ENCODE measurements at regions of chr1 and their contacts with region 1.

Region 1: DNA sequence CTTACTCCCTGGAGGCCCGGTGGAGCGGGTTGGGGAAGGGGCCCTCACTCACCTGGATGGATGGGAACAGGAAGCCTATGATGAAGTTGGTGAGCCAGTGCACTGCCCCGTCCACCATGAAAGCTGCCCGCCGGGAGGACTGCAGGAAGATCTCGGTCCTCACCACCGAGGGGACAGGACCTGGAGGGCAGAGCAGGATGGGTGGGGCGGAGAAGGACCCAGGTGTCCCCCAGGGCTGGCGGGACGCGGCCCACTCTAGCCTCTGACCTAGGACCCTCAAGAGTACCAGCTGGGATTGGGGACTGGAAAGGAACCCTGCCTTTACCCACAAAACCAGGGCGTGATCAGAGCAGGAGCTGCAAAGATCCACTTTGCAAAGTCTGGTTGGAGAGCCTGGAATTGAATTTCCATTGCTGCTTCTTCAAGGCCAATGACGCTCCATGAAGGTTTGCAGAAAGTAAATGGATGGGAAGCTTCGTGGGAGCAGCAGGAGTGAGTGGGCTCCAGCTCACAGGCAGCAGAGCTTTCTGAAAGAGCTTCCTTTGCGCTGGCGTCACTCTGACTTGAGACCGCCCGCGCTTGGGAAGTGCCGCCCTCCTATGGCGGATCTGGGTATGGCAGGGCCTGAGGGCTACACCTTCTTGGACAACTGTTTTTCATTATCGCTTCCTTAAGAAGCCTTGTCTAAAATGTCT is 21.4 kb downstream of the SLC2A7 start:
- DNase-seq: peak; percentile 94
- ATAC-seq: peak; percentile 76
- H3K4me3 Mint-ChIP-seq: peak overlapping the region; percentile 77
- H3K27ac Mint-ChIP-seq: peak overlapping the region; percentile 81
- H3K4me1 Mint-ChIP-seq: peaks cover 17% of the 10 kb centered on the region
- H3K27me3 Mint-ChIP-seq: peaks cover 3% of the 10 kb centered on the region

Region 2: GRCh38 chr1:8858888-8859706 is 145.8 kb before region 1 on chr1:
- POLR2A ChIA-PET with region 1: interaction called, 18 read pairs
- DNase-seq: no peak
- ATAC-seq: peak; percentile 38
- H3K4me3 Mint-ChIP-seq: peak overlapping the region; percentile 48
- H3K27ac Mint-ChIP-seq: peak overlapping the region; percentile 64
- H3K4me1 Mint-ChIP-seq: peaks cover 47% of the 10 kb centered on the region
- H3K27me3 Mint-ChIP-seq: no peaks in the 10 kb centered on the region

Region 3: GRCh38 chr1:8910914-8911313 is 93.9 kb before region 1 on chr1:
- POLR2A ChIA-PET with region 1: interaction called, 27 read pairs
- DNase-seq: no peak
- ATAC-seq: no peak
- H3K4me3 Mint-ChIP-seq: no peak overlapping the region
- H3K27ac Mint-ChIP-seq: peak overlapping the region; percentile 79
- H3K4me1 Mint-ChIP-seq: peaks cover 47% of the 10 kb centered on the region
- H3K27me3 Mint-ChIP-seq: no peaks in the 10 kb centered on the region

Region 4: DNA sequence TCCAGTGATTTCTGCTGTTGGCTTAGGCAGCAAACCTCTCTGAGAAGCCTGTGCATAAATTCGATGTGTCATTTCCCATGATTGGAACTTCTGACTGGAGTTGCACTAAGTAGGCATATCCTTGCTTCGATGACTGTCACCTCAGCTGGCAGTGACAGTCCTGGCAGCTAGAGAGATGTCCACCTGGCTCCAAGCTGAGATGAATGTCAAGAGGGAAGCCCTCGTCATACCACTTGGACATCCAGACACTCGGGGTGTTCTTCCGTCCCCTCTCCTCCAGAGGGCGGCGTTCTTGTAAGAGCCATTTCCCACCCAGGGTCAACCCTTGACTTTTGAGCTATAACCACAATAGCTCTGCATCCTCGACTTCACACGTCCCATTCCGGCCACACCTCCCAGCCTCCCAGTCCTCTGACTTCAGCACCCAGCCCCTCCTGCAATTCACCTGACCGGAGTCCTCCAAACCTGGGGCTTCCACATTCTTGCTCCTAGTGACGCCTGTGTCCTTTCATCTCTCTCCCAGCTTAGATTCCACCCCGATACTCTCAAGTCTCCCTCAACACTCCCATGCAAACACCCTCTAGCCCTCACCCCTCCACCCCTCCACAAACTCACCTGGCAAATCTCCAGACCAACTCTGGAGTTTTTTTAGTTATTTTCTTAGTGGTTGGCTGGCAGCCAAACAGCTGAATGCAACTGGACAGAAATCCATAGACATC is 41.9 kb before region 1 on chr1:
- POLR2A ChIA-PET with region 1: interaction called, 18 read pairs
- DNase-seq: peak; percentile 71
- ATAC-seq: peak; percentile 53
- H3K4me3 Mint-ChIP-seq: peak overlapping the region; percentile 79
- H3K27ac Mint-ChIP-seq: peak overlapping the region; percentile 86
- H3K4me1 Mint-ChIP-seq: peaks cover 70% of the 10 kb centered on the region
- H3K27me3 Mint-ChIP-seq: no peaks in the 10 kb centered on the region

Region 5: DNA sequence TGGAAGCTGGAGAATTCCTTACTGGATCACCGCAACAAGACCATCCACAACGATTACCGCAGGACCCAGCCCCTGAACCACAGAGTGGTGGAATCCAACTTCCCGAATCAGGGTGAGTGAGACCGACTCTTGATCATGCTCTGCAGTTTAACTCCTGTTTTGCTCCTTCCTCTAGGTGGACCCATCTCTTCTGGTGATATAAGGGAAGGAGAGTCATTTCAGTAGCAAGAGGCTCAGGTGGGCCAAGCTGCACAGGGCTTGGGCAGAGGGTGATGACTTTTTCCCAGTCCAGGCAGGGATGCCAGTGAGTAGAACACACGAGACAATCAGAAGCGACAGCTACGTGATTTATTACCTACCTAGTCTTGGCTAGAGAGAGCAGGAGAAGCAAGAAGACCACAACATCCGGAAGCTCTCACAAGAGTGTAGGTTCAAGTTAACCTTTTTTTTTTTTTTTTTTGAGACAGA is 33.9 kb before region 1 on chr1:
- POLR2A ChIA-PET with region 1: interaction called, 13 read pairs
- DNase-seq: peak; percentile 70
- ATAC-seq: peak; percentile 80
- H3K4me3 Mint-ChIP-seq: peak overlapping the region; percentile 97
- H3K27ac Mint-ChIP-seq: peak overlapping the region; percentile 100
- H3K4me1 Mint-ChIP-seq: peaks cover 37% of the 10 kb centered on the region
- H3K27me3 Mint-ChIP-seq: no peaks in the 10 kb centered on the region

Region 6: GRCh38 chr1:9018333-9018732 is 13.5 kb after region 1 on chr1:
- POLR2A ChIA-PET with region 1: no interaction called
- DNase-seq: no peak
- ATAC-seq: no peak
- H3K4me3 Mint-ChIP-seq: no peak overlapping the region
- H3K27ac Mint-ChIP-seq: no peak overlapping the region
- H3K4me1 Mint-ChIP-seq: peaks cover 3% of the 10 kb centered on the region
- H3K27me3 Mint-ChIP-seq: peaks cover 22% of the 10 kb centered on the region

Region 7: GRCh38 chr1:9028921-9029705 is 24.3 kb after region 1 on chr1:
- POLR2A ChIA-PET with region 1: no interaction called
- DNase-seq: no peak
- ATAC-seq: no peak
- H3K4me3 Mint-ChIP-seq: no peak overlapping the region
- H3K27ac Mint-ChIP-seq: no peak overlapping the region
- H3K4me1 Mint-ChIP-seq: no peaks in the 10 kb centered on the region
- H3K27me3 Mint-ChIP-seq: peaks cover 2% of the 10 kb centered on the region